Mammary epithelial cell (primary cell): ENCODE measurements at regions of chr15 and their contacts with region 1.

Region 1: DNA sequence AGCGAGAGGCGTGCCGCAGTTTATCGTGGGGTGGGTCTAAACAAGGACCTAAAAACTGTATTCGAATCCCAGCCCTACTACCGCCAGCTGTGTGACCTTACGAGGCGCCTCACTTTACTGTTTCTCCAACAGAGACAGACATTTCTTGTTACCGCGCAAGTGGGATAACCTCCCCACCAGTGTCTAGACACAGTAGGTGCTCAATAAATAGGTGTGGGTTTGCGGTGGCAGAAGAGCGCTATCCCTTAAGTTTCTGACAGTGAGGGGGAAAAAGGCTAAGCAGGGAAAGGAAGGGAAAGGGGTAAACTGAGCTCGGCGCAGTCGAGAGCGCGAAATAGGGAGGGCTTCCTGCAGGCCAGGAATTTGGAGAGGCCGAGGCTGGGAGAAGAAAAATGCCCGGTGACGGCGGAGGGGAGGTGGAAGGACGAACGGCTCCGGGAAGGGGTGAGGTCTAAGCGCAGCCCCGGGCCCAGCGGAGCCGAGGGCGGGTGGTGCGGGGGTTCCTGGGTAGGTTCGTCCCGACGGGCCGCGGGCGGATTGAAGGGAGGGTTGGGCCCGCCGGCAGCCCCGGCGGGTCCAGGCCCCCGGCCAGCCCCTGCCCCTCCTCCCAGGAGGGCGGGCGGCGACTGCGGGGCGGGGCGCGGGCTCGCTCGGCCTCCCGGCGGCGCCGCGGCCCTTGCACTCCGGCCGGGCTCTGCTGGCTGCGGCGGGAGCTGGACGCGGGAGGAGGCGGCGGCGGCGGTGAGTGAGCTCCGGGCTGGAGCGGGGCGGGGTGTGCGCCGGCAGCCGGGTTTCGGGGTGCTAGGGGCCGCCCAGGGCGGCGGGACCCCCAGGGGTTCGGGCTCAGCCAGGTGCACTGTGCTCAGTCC is at the start of gene CGNL1:
- DNase-seq: no peak
- H3K4me3 ChIP-seq: peak within 1 kb of the TSS; percentile 42 to 52 (median 46)
- H3K27ac ChIP-seq: no peak within 1 kb of the TSS
- H3K4me1 ChIP-seq: peaks cover 10% of the 10 kb centered on the region
- H3K27me3 ChIP-seq: peaks cover 12% of the 10 kb centered on the region
- CTCF ChIP-seq: no peak
- total RNA-seq, gene CGNL1: 0.07 to 1.2 TPM

Region 2: DNA sequence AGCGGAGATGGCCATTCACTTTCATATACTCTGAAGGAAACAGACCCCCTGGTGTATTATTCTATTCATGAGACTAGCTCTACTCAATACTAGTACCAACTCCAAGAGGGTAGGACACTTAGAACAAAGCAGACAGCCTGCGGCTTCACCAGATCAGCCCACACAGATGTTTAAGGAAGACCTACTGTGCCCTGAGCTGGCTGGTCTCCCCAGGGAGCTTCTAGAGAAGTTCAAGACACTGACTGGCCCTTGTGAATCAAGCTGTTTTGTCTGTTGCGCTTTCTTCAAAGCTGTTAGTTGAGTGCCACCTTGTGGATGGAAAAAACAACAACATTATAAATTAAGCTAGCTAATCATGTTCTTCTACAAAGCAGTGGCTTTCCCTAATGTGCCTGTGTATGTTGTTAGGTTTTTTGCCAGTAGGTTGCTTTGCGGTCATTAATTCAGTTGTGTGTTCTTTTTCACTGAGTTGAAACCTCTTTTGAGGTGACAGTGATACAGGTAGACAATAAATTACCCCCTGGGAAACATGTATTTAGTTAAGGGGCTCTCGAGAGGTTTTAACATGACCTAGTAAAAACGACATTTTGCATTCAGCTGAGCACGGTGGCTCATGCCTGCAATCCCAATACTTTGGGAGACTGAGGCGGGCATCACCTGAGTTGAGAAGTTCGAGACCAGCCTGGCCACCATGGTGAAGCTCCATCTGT is 151.5 kb after region 1 on chr15:
- CTCF ChIA-PET with region 1: interaction called, 14 read pairs
- dilution Hi-C with region 1: no loop called
- in situ Hi-C with region 1: no loop called
- intact Hi-C with region 1: loop called (anchors 1 kb)
- DNase-seq: peak; percentile 68
- H3K4me3 ChIP-seq: no peak overlapping the region
- H3K27ac ChIP-seq: no peak overlapping the region
- H3K4me1 ChIP-seq: no peaks in the 10 kb centered on the region
- H3K27me3 ChIP-seq: no peaks in the 10 kb centered on the region
- CTCF ChIP-seq: peak; percentile 46 to 63